Endothelial cell of umbilical vein (primary cell): ENCODE measurements at regions of chr2 and their contacts with region 1.

Region 1: DNA sequence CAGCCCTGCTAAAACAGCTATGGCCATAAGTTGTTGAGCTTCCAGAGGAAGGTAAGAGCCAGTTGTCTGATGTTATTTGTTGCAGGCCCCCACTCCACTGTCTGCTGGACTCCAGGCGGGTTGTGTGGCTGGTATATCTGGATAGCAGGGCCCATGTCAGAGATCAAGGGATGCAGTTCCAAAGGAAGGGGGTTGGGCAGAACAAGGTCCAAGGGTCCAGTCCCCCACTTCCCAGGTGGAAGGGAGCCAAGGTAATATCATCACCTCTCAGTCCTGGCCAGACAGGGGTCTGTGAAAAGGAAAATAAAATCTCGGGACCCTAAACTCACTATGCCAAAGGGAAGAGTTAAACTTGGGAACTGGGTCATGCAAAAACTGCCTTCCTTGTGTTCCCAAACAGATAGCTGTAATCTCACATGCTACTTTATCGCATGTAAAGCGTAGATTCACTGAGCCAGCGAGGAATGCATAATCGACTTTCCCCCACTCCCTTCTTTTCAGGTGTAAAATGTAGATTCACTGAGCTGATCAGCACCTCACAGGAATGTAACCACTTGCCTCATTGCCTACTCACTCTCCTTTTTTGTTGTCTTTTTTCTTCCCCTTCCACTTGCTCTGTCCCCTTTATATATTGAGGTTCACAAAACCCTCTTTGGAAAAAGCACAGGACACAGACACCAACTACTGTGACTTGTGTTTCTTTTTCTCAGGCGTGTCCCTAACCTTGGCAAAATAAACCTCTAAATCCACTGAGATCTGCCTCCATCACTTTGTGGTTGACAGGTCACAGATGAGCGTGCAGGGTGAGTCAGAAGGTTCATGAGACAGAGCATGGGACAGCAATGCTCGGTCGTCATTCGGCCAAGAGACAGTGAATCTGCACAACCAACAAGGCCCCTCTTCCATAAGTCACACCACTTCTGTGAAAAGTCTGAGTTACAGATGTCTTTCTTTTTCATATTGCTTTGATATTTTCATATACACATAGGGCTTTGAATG is 255.3 kb upstream of the SIX2 start:
- DNase-seq: no peak
- H3K4me3 ChIP-seq: no peak overlapping the region
- H3K27ac ChIP-seq: no peak overlapping the region
- H3K4me1 ChIP-seq: peaks cover 55% of the 10 kb centered on the region
- H3K27me3 ChIP-seq: no peaks in the 10 kb centered on the region
- CTCF ChIP-seq: no peak
- POLR2A ChIP-seq: no peak

Region 2: DNA sequence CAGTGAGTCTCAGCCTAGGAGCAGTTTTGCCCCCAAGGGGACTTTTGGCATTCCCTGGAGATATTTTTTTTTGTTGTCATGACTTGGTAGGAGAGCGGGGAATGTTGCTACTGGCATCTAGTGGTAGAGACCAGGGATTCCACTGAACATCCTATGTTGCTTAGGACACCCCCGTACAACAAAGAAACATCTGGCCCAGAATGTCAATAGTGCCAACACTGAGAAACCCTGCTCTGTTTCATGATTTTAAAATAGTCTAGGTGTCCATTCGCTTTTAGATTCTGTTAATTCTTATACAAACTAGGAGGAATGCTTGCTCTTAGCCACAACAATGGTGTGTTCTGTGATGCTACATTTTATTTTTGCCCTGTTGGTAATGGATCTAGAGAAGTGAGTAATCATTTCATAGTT is 548.9 kb before region 1 on chr2:
- CTCF ChIA-PET with region 1: no interaction called
- POLR2A ChIA-PET with region 1: no interaction called
- dilution Hi-C with region 1: no loop called
- intact Hi-C with region 1: no loop called
- DNase-seq: peak; percentile 26
- H3K4me3 ChIP-seq: no peak overlapping the region
- H3K27ac ChIP-seq: no peak overlapping the region
- H3K4me1 ChIP-seq: no peaks in the 10 kb centered on the region
- H3K27me3 ChIP-seq: no peaks in the 10 kb centered on the region
- CTCF ChIP-seq: peak; percentile 16 to 43
- POLR2A ChIP-seq: no peak

Region 3: GRCh38 chr2:45237850-45238542 is 26.5 kb before region 1 on chr2:
- CTCF ChIA-PET with region 1: interaction called, 6 read pairs
- POLR2A ChIA-PET with region 1: no interaction called
- dilution Hi-C with region 1: no loop called
- intact Hi-C with region 1: loop called (anchors 2 kb)
- DNase-seq: peak; percentile 62
- H3K4me3 ChIP-seq: no peak overlapping the region
- H3K27ac ChIP-seq: peak overlapping the region; percentile 7
- H3K4me1 ChIP-seq: peaks cover 34% of the 10 kb centered on the region
- H3K27me3 ChIP-seq: no peaks in the 10 kb centered on the region
- CTCF ChIP-seq: peak in 1 of 2 donors; percentile 16
- POLR2A ChIP-seq: no peak

Region 4: DNA sequence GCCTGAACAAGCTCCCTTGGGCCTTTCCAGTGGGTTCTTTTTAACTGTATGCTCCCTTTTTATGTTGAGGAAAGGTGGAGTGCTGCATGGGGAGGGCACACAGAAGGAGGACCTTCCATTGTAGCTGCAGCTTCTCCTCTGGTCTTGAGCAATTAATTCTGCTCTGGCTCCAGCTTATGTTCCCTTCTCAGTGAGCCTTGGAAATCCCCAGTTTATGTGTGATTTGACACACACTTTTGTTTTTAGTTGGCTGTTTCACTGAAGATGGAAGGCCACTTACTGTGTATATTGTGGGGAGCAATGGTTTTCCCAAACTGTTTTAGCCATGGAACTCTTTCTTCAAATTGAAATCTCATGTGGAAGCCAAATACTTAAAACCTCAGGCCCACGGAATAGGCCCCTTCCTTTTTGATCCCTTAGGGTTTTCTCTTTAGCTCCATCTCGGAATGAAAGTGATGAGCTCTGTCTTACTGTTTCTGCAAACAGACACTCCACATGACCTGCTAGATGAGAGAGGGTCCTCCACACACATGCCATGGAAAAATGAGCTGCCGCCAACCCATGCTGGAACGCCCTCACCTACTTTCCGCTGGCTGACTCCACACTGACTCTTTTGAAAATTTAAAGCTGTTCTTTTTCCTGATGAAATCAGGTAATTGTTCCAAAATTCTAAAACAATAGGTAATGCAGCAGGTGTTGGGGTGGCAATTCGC is 25.6 kb after region 1 on chr2:
- CTCF ChIA-PET with region 1: interaction called, 7 read pairs
- POLR2A ChIA-PET with region 1: no interaction called
- dilution Hi-C with region 1: no loop called
- intact Hi-C with region 1: loop called (anchors 1 kb)
- DNase-seq: no peak
- H3K4me3 ChIP-seq: no peak overlapping the region
- H3K27ac ChIP-seq: peak overlapping the region; percentile 3
- H3K4me1 ChIP-seq: peaks cover 54% of the 10 kb centered on the region
- H3K27me3 ChIP-seq: no peaks in the 10 kb centered on the region
- CTCF ChIP-seq: no peak
- POLR2A ChIP-seq: no peak

Region 5: GRCh38 chr2:45353879-45354278 is 89.4 kb after region 1 on chr2:
- CTCF ChIA-PET with region 1: no interaction called
- POLR2A ChIA-PET with region 1: interaction called, 3 read pairs
- dilution Hi-C with region 1: no loop called
- intact Hi-C with region 1: loop called (anchors 2 kb)
- DNase-seq: peak; percentile 97
- H3K4me3 ChIP-seq: no peak overlapping the region
- H3K27ac ChIP-seq: peak overlapping the region; percentile 85
- H3K4me1 ChIP-seq: peaks cover 17% of the 10 kb centered on the region
- H3K27me3 ChIP-seq: no peaks in the 10 kb centered on the region
- CTCF ChIP-seq: no peak
- POLR2A ChIP-seq: peak; percentile 38

Region 6: DNA sequence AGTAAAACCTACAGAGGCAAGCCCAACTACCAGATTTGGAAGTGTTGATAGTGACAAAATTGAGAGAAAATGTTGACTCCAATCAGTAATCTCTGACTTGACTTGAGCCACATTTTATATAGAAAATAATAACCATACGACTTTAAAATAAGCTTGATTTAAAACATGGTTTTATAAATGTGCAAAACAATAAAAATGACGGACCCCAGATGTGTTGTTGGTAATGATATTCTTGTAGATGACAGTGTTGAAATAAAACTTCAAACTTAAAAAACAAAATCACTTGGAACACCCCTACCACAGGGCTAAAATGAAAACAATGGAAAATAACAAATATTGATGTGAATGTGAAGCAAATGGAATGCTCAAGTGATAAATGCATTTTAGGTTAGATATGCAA is 158.4 kb after region 1 on chr2:
- CTCF ChIA-PET with region 1: no interaction called
- POLR2A ChIA-PET with region 1: no interaction called
- dilution Hi-C with region 1: no loop called
- intact Hi-C with region 1: no loop called
- DNase-seq: no peak
- H3K4me3 ChIP-seq: no peak overlapping the region
- H3K27ac ChIP-seq: no peak overlapping the region
- H3K4me1 ChIP-seq: no peaks in the 10 kb centered on the region
- H3K27me3 ChIP-seq: no peaks in the 10 kb centered on the region
- CTCF ChIP-seq: no peak
- POLR2A ChIP-seq: no peak

Region 7: DNA sequence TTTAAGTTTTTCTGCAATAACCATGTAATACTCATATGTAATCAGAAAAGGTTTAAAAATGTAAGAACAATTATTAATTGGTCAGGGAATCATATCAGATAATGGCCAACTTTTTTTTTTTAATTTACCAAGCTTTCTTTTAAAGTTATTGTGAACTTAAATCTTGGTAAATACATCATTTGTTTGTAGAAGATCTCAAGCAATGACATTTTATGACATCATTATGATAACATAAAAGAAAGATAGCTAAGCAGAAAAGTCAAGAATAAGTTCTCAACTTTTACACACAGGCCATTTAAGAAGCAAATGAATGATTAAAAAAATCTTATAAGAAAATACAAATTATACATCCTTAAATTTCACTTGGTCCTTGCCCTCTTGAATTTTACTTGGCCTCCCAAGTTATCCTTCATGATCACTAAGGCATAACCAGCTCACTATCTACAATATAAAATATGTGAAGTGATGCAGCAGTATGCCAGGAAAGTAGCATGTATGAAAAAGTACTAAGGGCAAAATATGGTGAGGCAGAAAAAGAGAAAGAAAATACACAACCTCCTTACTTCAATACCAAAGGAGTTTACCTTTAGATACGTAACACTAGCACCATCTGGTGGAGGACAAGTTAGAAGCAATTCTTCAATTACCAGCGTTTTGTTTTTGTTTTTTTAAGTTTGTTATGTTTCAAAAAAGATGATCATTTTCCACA is 229.9 kb after region 1 on chr2:
- CTCF ChIA-PET with region 1: interaction called, 15 read pairs
- POLR2A ChIA-PET with region 1: no interaction called
- dilution Hi-C with region 1: no loop called
- intact Hi-C with region 1: no loop called
- DNase-seq: peak; percentile 78
- H3K4me3 ChIP-seq: no peak overlapping the region
- H3K27ac ChIP-seq: no peak overlapping the region
- H3K4me1 ChIP-seq: peaks cover 4% of the 10 kb centered on the region
- H3K27me3 ChIP-seq: no peaks in the 10 kb centered on the region
- CTCF ChIP-seq: peak; percentile 45
- POLR2A ChIP-seq: no peak